Activated naive CD4-positive, alpha-beta T cell treated with anti-CD3 and anti-CD28 coated beads for 36 hours (primary cell): ENCODE measurements at regions of chr17 and their contacts with region 1.

Region 1: GRCh38 chr17:81484195-81484979 is 28.2 kb downstream of the ACTG1 start:
- DNase-seq: peak; percentile 88
- H3K4me3 Mint-ChIP-seq: peak overlapping the region; percentile 18
- H3K27ac Mint-ChIP-seq: no peak overlapping the region
- H3K4me1 Mint-ChIP-seq: peaks cover 20% of the 10 kb centered on the region
- H3K27me3 Mint-ChIP-seq: peaks cover 21% of the 10 kb centered on the region

Region 2: DNA sequence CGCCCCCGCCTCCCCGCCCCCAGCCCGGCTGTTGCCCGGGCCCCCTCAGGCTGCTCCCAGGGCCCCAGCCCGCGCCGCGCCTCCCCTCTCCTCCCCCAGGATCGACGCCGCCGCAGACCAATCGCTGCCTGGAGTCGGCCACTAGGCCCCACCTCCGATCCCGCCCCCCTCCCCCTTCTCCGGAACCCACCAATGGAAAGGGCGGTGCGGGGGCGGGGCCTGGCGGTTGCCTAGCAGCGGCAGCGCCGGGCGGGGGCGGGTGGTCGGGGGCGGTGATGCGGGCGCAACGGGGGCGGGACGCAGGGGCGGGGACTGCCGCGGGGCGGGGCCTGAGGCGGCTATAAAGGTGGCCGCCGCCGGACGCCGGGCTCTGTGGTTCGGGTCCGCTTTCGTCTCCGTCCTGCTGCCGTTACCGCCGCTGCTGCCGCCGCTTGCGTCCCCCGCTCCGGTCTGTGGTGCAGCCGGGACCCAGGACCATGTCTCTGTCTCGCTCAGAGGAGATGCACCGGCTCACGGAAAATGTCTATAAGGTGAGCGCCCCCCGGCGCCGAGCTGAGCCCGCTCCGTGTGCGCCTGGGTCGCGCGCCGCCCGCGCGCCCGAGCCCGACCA is 449.5 kb before region 1 on chr17 and contains the start of gene BAIAP2:
- CTCF ChIA-PET with region 1: no interaction called
- intact Hi-C with region 1: loop called (anchors 10 kb)
- DNase-seq: peak; percentile 95
- H3K4me3 Mint-ChIP-seq: peak within 1 kb of the TSS; percentile 85
- H3K27ac Mint-ChIP-seq: no peak within 1 kb of the TSS
- H3K4me1 Mint-ChIP-seq: peaks cover 15% of the 10 kb centered on the region
- H3K27me3 Mint-ChIP-seq: peaks cover 19% of the 10 kb centered on the region
- total RNA-seq, gene BAIAP2: 3.9 to 4.2 TPM

Region 3: DNA sequence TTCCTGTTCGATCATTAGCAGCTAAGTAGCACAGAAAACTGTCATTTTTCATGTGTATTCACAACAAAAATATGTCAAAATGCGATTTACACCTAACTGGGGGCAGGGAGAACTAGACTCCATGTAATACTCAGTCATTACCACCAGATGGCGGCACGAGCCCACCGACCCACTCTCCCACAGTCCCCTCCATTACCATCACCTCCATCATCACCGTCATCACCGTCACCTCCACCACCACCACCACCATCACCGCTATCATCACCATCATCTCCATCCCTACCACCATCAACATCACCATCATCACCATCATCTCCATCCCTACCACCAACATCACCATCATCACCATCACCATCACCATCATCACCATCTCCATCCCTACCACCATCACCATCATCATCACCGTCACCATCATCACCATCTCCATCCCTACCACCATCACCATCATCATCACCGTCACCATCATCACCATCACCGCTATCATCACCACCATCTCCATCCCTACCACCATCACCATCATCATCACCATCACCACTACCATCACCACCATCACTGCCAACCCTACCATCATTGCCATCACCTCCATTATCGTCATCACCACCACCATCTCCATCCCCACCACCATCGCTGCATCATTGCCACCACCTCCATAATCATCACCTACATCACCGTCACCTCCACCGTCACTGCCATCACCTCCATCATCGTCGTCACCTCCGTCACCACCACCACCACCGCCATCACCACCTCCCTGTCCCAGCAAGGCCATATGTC is 230.8 kb before region 1 on chr17:
- CTCF ChIA-PET with region 1: interaction called, 10 read pairs
- intact Hi-C with region 1: loop called (anchors 1 kb)
- DNase-seq: peak; percentile 68
- H3K4me3 Mint-ChIP-seq: no peak overlapping the region
- H3K27ac Mint-ChIP-seq: no peak overlapping the region
- H3K4me1 Mint-ChIP-seq: peaks cover 5% of the 10 kb centered on the region
- H3K27me3 Mint-ChIP-seq: no peaks in the 10 kb centered on the region

Region 4: DNA sequence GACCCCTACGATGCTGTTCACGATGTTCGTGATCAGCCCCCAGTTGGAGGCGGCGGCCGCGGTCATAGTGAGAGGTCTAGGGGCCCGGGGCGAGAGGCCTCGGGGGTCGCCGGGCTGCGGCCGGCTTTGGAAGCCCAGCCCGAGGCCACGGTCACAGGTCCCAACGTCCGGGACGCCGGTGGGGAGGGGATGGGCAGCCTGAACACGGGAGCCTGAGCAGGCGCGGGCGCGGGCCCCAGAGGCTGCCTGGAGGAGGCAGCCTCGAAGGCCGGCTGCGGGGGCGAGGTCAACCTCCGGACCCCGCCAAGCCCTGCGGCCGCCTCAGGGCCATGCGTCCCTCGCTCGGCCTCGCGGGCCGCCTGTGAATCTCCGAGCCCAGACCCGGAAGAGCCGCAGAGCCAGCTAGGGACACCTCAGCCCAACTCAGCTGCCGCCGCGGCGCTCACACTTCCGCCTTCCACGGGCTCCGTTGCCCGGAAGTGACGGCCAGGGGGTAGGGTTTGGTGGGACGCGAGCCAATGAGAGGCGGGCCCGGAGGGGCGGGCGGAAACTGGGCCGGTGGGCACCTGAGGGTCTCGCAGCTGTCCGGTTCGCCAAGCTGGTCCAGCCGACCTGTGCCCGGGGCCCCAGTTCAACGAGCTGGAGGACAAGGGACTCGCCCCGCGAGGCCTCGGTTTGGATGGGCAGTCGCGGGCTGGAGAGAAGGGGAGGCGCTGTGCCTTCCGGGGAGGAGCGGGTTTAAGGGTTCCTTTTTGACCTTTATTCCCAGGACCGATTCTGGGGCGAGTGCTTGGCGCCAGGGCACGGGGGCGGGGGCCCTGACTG is 189.3 kb before region 1 on chr17 and contains the start of gene SLC38A10:
- CTCF ChIA-PET with region 1: interaction called, 27 read pairs
- intact Hi-C with region 1: loop called (anchors 1 kb)
- DNase-seq: peak; percentile 95
- H3K4me3 Mint-ChIP-seq: peak within 1 kb of the TSS; percentile 92
- H3K27ac Mint-ChIP-seq: peak within 1 kb of the TSS; percentile 91
- H3K4me1 Mint-ChIP-seq: peaks cover 36% of the 10 kb centered on the region
- H3K27me3 Mint-ChIP-seq: no peaks in the 10 kb centered on the region
- total RNA-seq, gene SLC38A10: 29.1 to 31.9 TPM

Region 5: DNA sequence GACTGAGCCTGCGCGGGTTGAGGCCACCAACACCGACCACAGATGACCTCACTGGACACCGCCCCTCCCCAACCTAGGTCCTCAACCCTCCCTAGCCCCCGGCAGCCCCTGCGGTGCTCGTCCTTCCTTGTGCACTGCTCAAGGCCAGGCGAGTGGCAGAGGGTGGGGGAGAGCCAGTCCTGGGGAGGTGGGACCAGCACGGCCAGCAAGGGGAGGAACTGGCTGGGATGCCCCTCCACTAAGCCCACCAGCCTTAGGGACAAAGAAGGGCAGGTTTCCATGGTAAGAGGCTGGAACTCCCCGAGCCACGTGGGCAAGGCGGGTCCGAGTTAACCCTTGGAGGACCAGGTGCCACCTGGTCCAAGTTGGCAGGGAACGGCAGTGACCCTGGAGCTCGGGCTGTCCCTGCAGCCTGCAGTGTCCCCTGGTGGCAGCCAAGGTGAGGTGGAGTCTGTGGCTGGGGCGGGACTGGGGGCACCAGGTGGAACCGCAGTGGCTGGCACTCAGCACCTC is 53.0 kb after region 1 on chr17:
- CTCF ChIA-PET with region 1: no interaction called
- intact Hi-C with region 1: no loop called
- DNase-seq: peak; percentile 31
- H3K4me3 Mint-ChIP-seq: no peak overlapping the region
- H3K27ac Mint-ChIP-seq: no peak overlapping the region
- H3K4me1 Mint-ChIP-seq: peaks cover 1% of the 10 kb centered on the region
- H3K27me3 Mint-ChIP-seq: peaks cover 11% of the 10 kb centered on the region

Region 6: GRCh38 chr17:81553018-81553615 is 68.7 kb after region 1 on chr17:
- CTCF ChIA-PET with region 1: no interaction called
- intact Hi-C with region 1: loop called (anchors 1 kb)
- DNase-seq: peak; percentile 84
- H3K4me3 Mint-ChIP-seq: peak overlapping the region; percentile 83
- H3K27ac Mint-ChIP-seq: peak overlapping the region; percentile 82
- H3K4me1 Mint-ChIP-seq: peaks cover 38% of the 10 kb centered on the region
- H3K27me3 Mint-ChIP-seq: no peaks in the 10 kb centered on the region